ENCODE measurements at regions of chr20 and their contacts with region 1.

Region 1: DNA sequence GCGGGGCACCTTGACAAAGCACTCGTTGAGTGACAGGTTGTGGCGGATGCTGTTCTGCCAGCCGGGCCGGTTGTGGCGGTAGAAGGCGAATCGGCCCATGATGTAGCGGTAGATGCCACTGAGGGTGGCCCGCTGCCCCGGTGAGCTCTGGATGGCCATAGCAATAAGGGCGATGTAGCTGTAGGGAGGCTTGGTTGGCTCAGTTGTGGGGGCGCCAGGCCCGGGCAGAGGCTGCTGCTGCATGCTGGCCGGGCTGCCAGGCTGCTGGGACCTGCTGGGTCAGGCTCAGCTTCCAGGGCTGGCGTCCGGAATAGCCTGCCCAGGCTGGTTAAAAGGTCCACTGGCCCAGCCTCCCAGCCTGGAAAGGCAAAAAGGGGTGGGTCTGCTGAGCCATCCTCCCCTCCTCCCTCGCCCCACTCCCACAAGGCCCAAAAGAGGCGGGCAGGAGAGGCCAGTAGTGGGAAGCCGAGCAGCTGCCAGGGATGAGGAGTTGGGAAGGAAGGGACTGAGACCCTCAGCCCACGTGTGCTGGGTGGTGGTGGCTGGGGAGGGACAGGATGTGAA is at the start of gene FOXS1:
- DNase-seq: no peak
- H3K4me3 ChIP-seq: no peak within 1 kb of the TSS
- H3K27ac ChIP-seq: no peak within 1 kb of the TSS
- H3K27me3 ChIP-seq: peaks cover 33% of the 10 kb centered on the region
- CTCF ChIP-seq: no peak
- polyA plus RNA-seq, gene FOXS1: not detected in 2 replicates

Region 2: DNA sequence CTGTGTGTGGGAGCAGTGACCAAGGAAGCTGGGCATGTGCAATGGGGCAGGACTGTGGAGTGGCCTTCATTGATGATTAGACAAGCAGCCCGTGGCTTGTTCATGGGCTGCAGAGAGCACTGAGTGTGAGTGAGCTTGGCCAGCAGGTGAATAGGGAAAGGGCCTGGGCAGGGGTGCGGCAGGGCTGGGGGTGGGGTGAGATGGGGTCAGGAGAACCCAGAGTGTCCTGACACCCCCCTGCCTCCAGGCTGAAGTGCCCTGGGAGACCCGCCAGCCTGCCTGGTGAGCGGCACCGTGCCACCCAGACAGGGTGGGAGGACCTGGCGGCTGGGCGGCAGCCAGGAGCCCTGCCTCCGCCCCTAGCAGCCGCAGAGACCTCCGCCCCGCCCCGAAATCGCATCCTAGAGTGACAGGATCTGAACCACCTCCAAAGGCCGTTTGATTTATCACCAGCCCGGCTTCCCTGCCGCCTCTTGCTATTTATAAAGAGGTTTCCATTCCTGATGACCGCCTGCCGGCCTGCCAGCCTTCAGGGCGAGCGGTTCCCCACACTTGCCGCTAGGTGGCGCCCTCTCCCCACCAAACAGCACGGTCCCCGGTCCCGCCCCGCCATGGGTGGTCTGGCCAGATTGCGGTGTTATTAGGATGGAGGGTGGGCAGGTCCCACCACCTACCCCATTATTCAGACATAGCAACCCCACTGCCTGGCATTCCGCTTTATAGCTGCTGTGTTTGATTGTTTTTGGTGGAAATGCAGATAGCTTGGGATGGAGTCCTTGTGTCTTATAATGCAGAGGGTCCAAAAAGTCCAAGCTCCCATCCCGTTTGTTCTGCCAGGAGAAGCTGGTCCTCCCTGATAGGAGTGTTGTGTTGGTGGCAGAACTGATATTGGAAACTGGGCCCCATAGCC is 22.7 kb before region 1 on chr20:
- CTCF ChIA-PET with region 1: interaction called, 20 read pairs
- POLR2A ChIA-PET with region 1: no interaction called
- DNase-seq: no peak
- H3K4me3 ChIP-seq: peak overlapping the region; percentile 13; the same call in 1 of the 2 replicates
- H3K27ac ChIP-seq: no peak overlapping the region
- H3K27me3 ChIP-seq: peaks cover 2% of the 10 kb centered on the region
- CTCF ChIP-seq: peak; percentile 94

Region 3: GRCh38 chr20:31856516-31856915 is 11.1 kb after region 1 on chr20:
- CTCF ChIA-PET with region 1: interaction called, 18 read pairs
- POLR2A ChIA-PET with region 1: no interaction called
- DNase-seq: no peak
- H3K4me3 ChIP-seq: no peak overlapping the region
- H3K27ac ChIP-seq: no peak overlapping the region
- H3K27me3 ChIP-seq: peaks cover 52% of the 10 kb centered on the region
- CTCF ChIP-seq: no peak

Region 4: DNA sequence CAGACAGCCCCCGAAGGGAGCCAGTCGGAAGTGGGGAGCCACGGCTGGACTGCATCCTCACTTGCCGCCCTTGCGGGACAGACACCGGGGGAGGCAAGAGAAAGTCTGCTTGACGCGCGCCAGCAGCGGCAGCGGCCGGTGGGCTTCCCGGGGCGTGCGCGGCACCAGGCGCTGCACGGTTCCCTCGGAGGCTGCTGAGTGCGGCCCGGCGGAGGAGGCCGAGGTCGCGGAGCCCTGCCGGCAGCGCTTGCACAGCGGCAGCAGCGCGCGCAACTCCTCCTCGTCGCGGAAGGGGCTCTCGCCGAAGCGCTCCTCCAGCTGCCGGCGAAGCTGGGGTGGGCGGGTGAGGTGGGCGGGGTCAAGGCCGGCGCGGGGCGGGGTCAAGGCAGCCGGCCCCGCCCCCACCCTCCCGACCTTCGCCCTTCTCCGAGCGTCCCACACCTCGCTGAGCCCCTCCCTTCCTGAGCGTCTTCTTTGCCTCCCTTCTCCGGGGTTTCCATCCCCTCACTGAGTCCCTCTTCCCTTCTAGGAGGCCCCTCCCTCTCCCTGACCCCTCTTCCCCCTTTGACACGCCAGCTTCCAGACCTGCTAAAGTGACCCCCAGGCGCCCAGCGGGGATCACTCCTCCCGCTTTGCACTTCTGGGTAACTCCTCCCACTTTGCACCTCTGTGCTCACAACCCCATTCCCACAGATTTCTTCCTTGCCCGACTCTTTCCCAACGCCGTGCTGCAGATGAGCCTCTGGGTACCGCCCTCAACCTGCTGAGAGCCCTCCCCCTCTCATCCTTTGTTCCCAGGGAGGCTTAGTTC is 16.2 kb after region 1 on chr20:
- CTCF ChIA-PET with region 1: interaction called, 18 read pairs
- POLR2A ChIA-PET with region 1: no interaction called
- DNase-seq: no peak
- H3K4me3 ChIP-seq: peak overlapping the region; percentile 48
- H3K27ac ChIP-seq: no peak overlapping the region
- H3K27me3 ChIP-seq: peaks cover 63% of the 10 kb centered on the region
- CTCF ChIP-seq: no peak

Region 5: GRCh38 chr20:31962761-31963160 is 117.4 kb after region 1 on chr20:
- CTCF ChIA-PET with region 1: no interaction called
- POLR2A ChIA-PET with region 1: no interaction called
- DNase-seq: no peak
- H3K4me3 ChIP-seq: no peak overlapping the region
- H3K27ac ChIP-seq: no peak overlapping the region
- H3K27me3 ChIP-seq: peaks cover 28% of the 10 kb centered on the region
- CTCF ChIP-seq: no peak

Region 6: DNA sequence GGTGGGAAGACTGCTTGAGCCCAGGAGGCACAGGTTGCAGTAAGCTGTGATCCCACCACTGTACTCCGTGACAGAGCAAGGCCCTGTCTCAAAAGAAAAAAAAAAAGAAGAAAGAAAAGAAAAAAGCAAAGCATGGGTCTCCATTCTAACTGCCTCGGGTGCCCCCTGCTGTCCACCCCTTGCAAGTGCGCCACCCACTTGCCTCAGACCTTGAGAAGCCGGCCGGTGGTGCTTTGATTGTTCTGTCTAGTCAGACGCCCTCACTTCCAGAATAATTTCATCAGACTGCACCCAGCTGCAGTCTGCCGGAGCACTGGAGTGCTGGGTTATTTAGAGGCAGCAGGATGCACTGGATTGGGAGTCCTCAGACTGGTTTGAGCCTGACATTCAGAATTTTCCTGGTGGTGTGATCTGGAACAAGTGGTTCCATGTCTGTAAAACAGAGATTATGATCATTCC is 246.5 kb after region 1 on chr20:
- CTCF ChIA-PET with region 1: interaction called, 58 read pairs
- POLR2A ChIA-PET with region 1: no interaction called
- DNase-seq: peak; percentile 47
- H3K4me3 ChIP-seq: no peak overlapping the region
- H3K27ac ChIP-seq: no peak overlapping the region
- H3K27me3 ChIP-seq: peaks cover 42% of the 10 kb centered on the region
- CTCF ChIP-seq: peak; percentile 94

Region 7: GRCh38 chr20:32485770-32486478 is 640.5 kb after region 1 on chr20:
- CTCF ChIA-PET with region 1: no interaction called
- POLR2A ChIA-PET with region 1: no interaction called
- DNase-seq: no peak
- H3K4me3 ChIP-seq: no peak overlapping the region
- H3K27ac ChIP-seq: no peak overlapping the region
- H3K27me3 ChIP-seq: peaks cover 2% of the 10 kb centered on the region
- CTCF ChIP-seq: no peak

Measured in AG04450 (cell line).